A673 (cell line): ENCODE measurements at regions of chr17 and their contacts with region 1.

Region 1: GRCh38 chr17:979538-980405 is at the start of gene NXN:
- DNase-seq: peak; percentile 74
- H3K4me3 ChIP-seq: peak within 1 kb of the TSS; percentile 54
- H3K27ac ChIP-seq: no peak within 1 kb of the TSS
- H3K4me1 ChIP-seq: peaks cover 8% of the 10 kb centered on the region
- H3K27me3 ChIP-seq: peaks cover 41% of the 10 kb centered on the region
- CTCF ChIP-seq: 0 out of 2 replicates have a peak, but pooled peaks have one; percentile 27
- total RNA-seq, gene NXN: 6.0 and 9.8 TPM in 2 replicates

Region 2: GRCh38 chr17:409848-410545 is 569.8 kb before region 1 on chr17:
- CTCF ChIA-PET with region 1: interaction called, 8 read pairs
- POLR2A ChIA-PET with region 1: no interaction called
- intact Hi-C with region 1: loop called (anchors 5 kb)
- DNase-seq: peak; percentile 98
- H3K4me3 ChIP-seq: peak overlapping the region; percentile 84
- H3K27ac ChIP-seq: peak overlapping the region; percentile 93
- H3K4me1 ChIP-seq: peaks cover 16% of the 10 kb centered on the region
- H3K27me3 ChIP-seq: no peaks in the 10 kb centered on the region
- CTCF ChIP-seq: no peak

Region 3: DNA sequence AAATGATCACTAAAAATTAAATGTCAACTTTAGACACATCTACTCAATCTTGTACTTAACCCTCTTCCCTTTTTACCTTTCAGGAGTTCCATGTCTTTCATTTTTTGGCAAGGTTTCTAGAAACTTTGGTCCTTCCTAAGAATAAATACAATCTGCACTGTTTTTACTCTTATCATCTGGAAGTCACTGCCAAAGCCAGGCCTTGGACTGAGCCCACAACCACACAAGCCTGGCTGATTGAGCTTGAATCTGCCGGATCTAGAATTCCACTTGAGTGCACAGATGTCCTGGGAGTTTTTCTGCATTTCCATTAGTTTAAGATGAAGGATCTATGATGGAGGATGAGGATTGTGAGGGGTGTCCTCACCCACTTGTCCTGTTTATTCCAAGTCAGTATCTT is 391.3 kb before region 1 on chr17:
- CTCF ChIA-PET with region 1: interaction called, 10 read pairs
- POLR2A ChIA-PET with region 1: no interaction called
- intact Hi-C with region 1: no loop called
- DNase-seq: no peak
- H3K4me3 ChIP-seq: no peak overlapping the region
- H3K27ac ChIP-seq: no peak overlapping the region
- H3K4me1 ChIP-seq: no peaks in the 10 kb centered on the region
- H3K27me3 ChIP-seq: no peaks in the 10 kb centered on the region
- CTCF ChIP-seq: no peak

Region 4: GRCh38 chr17:794876-795275 is 184.9 kb before region 1 on chr17:
- CTCF ChIA-PET with region 1: interaction called, 20 read pairs
- POLR2A ChIA-PET with region 1: no interaction called
- intact Hi-C with region 1: loop called (anchors 1 kb)
- DNase-seq: peak; percentile 88
- H3K4me3 ChIP-seq: no peak overlapping the region
- H3K27ac ChIP-seq: no peak overlapping the region
- H3K4me1 ChIP-seq: peaks cover 4% of the 10 kb centered on the region
- H3K27me3 ChIP-seq: no peaks in the 10 kb centered on the region
- CTCF ChIP-seq: peak; percentile 96

Region 5: GRCh38 chr17:996554-997344 is 17.0 kb after region 1 on chr17 and contains the start of gene TIMM22:
- CTCF ChIA-PET with region 1: interaction called, 10 read pairs
- POLR2A ChIA-PET with region 1: interaction called, 3 read pairs
- intact Hi-C with region 1: no loop called
- DNase-seq: peak; percentile 99
- H3K4me3 ChIP-seq: peak within 1 kb of the TSS; percentile 82
- H3K27ac ChIP-seq: peak within 1 kb of the TSS; percentile 99
- H3K4me1 ChIP-seq: peaks cover 6% of the 10 kb centered on the region
- H3K27me3 ChIP-seq: no peaks in the 10 kb centered on the region
- CTCF ChIP-seq: peak; percentile 95
- total RNA-seq, gene TIMM22: 20.0 and 21.8 TPM in 2 replicates